ENCODE measurements at regions of chr17 and their contacts with region 1.

Region 1: DNA sequence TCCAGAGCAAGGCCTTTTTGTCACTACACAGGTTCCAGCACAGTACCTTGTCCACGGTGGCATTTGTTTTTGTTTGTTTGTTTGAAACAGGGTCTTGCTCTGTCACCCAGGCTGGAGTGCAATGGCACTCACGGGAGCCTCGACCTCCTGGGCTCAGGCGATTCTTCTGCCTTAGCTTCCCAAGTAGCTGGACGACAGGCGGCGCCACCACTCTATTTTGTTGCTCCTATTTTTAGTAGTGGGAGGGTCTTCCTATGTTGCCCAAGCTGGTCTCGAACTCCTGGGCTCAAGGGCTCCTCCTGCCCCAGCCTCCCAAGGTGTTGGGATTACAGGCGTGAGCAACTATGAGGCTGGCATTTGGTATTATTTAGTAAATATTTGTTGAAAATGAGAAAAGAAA is 10.3 kb downstream of the MRC2 start:
- DNase-seq: no peak
- ATAC-seq: no peak
- H3K4me3 ChIP-seq: no peak overlapping the region
- H3K4me3 Mint-ChIP-seq: no peak overlapping the region
- H3K27ac ChIP-seq: no peak overlapping the region
- H3K27ac Mint-ChIP-seq: no peak overlapping the region
- H3K4me1 ChIP-seq: no peaks in the 10 kb centered on the region
- H3K4me1 Mint-ChIP-seq: peaks cover 0 to 3% (median under 1%) of the 10 kb centered on the region in 3 donors
- H3K27me3 ChIP-seq: peaks cover 0 to 3% of the 10 kb centered on the region in 2 experiments
- H3K27me3 Mint-ChIP-seq: no peaks in the 10 kb centered on the region

Region 2: GRCh38 chr17:61473152-61473551 is 1164.7 kb before region 1 on chr17:
- CTCF ChIA-PET with region 1: no interaction called
- POLR2A ChIA-PET with region 1: interaction called in 1 of 2 experiments, 12 read pairs
- DNase-seq: no peak
- ATAC-seq: no peak
- H3K4me3 ChIP-seq: no peak overlapping the region
- H3K4me3 Mint-ChIP-seq: no peak overlapping the region
- H3K27ac ChIP-seq: no peak overlapping the region
- H3K27ac Mint-ChIP-seq: no peak overlapping the region
- H3K4me1 ChIP-seq: no peaks in the 10 kb centered on the region
- H3K4me1 Mint-ChIP-seq: no peaks in the 10 kb centered on the region
- H3K27me3 ChIP-seq: peaks cover 0 to 42% of the 10 kb centered on the region in 2 experiments
- H3K27me3 Mint-ChIP-seq: peaks cover 11 to 20% of the 10 kb centered on the region in 2 donors

Measured in T-cell (primary cell).